Posterior vena cava (tissue), 2 donors: ENCODE measurements at regions of chr1 and their contacts with region 1.

Region 1: GRCh38 chr1:75203415-75204277 is 69.5 kb downstream of the LHX8 start:
- DNase-seq: no peak

Region 2: DNA sequence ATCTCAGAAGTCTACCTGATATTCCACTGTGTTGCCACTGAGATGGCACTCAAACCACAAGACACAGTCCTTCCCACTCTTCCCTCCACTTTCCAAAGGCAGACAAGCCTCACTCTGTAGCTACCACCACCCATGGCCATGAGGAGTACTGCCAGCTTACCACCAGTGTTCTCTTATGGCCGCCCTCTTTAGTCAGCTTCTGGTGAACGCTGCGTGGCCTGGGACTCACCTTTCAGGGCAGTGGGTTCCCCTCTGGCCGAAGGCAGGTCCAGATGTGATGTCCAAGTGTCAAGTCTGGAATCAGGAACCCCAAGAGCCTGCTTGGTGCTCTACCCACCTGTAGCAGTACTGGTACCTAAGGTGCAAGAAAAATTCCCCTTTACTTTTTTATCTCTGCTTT is 1586.5 kb before region 1 on chr1:
- intact Hi-C with region 1: no loop called
- DNase-seq: no peak

Region 3: GRCh38 chr1:74771913-74772515 is 431.6 kb before region 1 on chr1:
- intact Hi-C with region 1: loop called in 1 of 2 experiments (anchors 5 kb)
- DNase-seq: no peak